ENCODE measurements at regions of chr20 and their contacts with region 1.

Region 1: GRCh38 chr20:9838378-9839295 is at the start of gene PAK5:
- DNase-seq: peak in 1 of 2 donors; percentile 8
- ATAC-seq: peak in 5 of 8 donors; percentile 16 to 70 (median 31)
- H3K4me3 ChIP-seq: peak within 1 kb of the TSS in 6 of 10 donors; percentile 3 to 34 (median 22)
- H3K27ac ChIP-seq: no peak within 1 kb of the TSS
- H3K4me1 ChIP-seq: peaks cover 0 to 10% (median 0%) of the 10 kb centered on the region in 9 donors
- H3K27me3 ChIP-seq: peaks cover 11 to 72% (median 40%) of the 10 kb centered on the region in 7 donors
- CTCF ChIP-seq: no peak
- total RNA-seq, gene PAK5: 0.04 TPM in 1 of 10 donors, not detected in the others

Region 2: GRCh38 chr20:9775176-9775575 is 63.5 kb before region 1 on chr20:
- intact Hi-C with region 1: loop called in 1 of 10 experiments (anchors 10 kb)
- DNase-seq: no peak
- ATAC-seq: no peak
- H3K4me3 ChIP-seq: no peak overlapping the region
- H3K27ac ChIP-seq: no peak overlapping the region
- H3K4me1 ChIP-seq: no peaks in the 10 kb centered on the region
- H3K27me3 ChIP-seq: no peaks in the 10 kb centered on the region
- CTCF ChIP-seq: no peak

Region 3: GRCh38 chr20:9794831-9795230 is 43.8 kb before region 1 on chr20:
- intact Hi-C with region 1: loop called in 1 of 10 experiments (anchors 1 kb)
- DNase-seq: no peak
- ATAC-seq: no peak
- H3K4me3 ChIP-seq: no peak overlapping the region
- H3K27ac ChIP-seq: no peak overlapping the region
- H3K4me1 ChIP-seq: no peaks in the 10 kb centered on the region
- H3K27me3 ChIP-seq: no peaks in the 10 kb centered on the region
- CTCF ChIP-seq: no peak